Spleen (tissue), 13 donors: ENCODE measurements at regions of chr12 and their contacts with region 1.

Region 1: DNA sequence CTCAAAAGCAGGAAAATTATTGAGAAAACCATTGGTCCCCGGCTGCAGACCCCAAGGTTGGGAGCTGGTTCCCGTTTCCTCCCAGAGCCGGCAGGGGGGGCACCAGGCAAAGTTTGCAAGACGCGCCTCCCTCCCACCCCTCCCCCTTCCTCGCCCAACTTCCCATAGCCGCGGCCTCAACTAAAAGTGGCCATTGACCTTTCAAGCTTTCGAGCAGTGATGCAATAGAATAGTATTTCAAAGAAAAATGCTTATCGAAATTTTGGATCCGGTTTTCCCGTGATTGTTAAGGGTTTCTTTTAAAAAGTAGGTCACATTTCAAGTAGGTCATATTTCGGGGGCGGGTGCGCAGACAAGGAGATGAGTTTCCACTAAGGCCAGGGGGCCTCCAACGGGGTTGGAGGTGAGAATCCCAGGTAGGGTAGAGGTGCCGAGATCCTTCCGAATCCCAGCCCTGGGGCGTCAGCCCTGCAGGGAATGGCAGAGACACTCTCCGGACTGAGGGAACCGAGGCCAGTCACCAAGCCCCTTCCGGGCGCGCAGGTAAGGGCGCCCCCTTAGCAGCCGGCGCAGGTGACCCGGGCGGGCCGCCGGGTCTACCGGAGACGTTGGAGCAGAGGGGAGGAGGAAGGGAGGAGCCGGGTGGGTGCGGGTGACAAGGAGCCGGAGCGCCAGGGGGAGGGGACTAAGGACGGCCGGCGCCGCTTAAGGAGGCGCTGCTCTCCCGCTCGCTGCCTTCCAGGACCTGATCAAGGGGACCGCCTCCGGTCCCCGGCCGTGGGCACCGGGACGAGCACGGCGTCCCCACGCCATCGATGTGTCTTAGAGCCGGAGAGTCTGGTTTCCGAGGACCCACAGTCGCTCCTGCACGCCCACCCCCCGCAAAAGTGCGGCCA is 2.6 kb upstream of the SOCS2 start:
- DNase-seq: peak; percentile 92
- H3K4me3 ChIP-seq: peak overlapping the region; percentile 70 to 96 (median 84)
- H3K27ac ChIP-seq: peak overlapping the region; percentile 71 to 92 (median 90)
- H3K4me1 ChIP-seq: peaks cover 12 to 62% (median 41%) of the 10 kb centered on the region in 6 donors
- H3K27me3 ChIP-seq: peaks cover 0 to 63% (median 19%) of the 10 kb centered on the region in 7 donors
- CTCF ChIP-seq: peak; percentile 10 to 87 (median 73)
- POLR2A ChIP-seq: no peak

Region 2: DNA sequence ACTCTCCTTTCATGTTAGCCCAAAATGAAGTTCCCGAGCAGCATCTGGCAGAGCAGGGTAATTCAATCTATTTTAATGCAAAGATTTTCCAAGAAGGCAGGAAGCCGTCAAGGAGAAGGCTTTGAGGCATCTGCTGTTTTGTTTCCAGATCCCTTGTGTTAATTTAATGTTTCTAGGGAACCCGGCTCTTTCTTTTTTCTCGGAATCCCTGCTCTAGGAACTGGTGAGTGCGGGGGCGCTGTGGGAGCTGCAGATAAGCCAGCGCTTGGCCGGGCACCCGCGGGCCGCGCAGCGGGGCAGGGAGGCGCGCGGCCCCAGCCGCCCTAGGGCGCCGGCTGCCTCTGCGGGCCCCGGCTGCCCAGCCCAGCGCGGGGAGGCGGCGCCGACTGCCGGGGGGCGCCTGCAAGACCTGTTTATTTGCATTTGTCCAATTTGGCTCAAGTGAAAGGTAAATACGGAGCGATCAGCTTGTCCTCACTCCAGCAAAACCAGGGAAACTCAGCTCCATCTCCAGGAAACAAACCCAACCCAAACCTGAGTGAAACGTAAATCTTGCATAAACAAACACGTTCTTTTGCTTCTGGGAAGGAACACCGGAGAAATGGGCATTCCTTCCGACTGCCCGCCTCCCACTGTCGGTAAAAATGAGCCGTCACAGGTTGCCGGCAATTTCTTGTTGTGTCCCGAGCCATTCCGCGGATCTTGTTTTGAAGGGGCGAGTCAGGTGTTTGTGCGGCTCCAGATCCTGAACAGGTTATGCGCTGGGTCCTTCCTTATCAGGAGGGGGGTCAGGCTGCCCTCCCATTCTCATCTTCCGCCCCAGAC is 172.4 kb after region 1 on chr12:
- intact Hi-C with region 1: loop called (anchors 10 kb)
- DNase-seq: peak; percentile 91
- H3K4me3 ChIP-seq: peak overlapping the region; percentile 40 to 75 (median 46)
- H3K27ac ChIP-seq: peak overlapping the region; percentile 66 to 87 (median 84)
- H3K4me1 ChIP-seq: peaks cover 6 to 63% (median 46%) of the 10 kb centered on the region in 6 donors
- H3K27me3 ChIP-seq: no peaks in the 10 kb centered on the region
- CTCF ChIP-seq: peak in 6 of 11 experiments; percentile 12 to 49 (median 26)
- POLR2A ChIP-seq: no peak